H1 (cell line): ENCODE measurements at regions of chr17 and their contacts with region 1.

Region 1: GRCh38 chr17:40113110-40113906 is 8.5 kb upstream of the MSL1 start:
- DNase-seq: peak in 1 of 2 experiments; percentile 92
- H3K4me3 ChIP-seq: peak overlapping the region; percentile 1 to 53 (median 11); a peak in 5 of 8 replicates
- H3K27ac ChIP-seq: peak overlapping the region; percentile 93
- H3K4me1 ChIP-seq: peaks cover 23 to 33% (median 31%) of the 10 kb centered on the region in 4 experiments
- H3K27me3 ChIP-seq: no peaks in the 10 kb centered on the region; a peak in 2 of 7 replicates
- CTCF ChIP-seq: peak; percentile 73 to 90 (median 78)
- EP300 ChIP-seq: peak in 1 of 2 experiments; percentile 4; a peak in 1 of 3 replicates
- POLR2A ChIP-seq: peak in 1 of 2 experiments; percentile 86; a peak in 2 of 3 replicates
- RAD21 ChIP-seq: peak; percentile 80 to 84

Region 2: DNA sequence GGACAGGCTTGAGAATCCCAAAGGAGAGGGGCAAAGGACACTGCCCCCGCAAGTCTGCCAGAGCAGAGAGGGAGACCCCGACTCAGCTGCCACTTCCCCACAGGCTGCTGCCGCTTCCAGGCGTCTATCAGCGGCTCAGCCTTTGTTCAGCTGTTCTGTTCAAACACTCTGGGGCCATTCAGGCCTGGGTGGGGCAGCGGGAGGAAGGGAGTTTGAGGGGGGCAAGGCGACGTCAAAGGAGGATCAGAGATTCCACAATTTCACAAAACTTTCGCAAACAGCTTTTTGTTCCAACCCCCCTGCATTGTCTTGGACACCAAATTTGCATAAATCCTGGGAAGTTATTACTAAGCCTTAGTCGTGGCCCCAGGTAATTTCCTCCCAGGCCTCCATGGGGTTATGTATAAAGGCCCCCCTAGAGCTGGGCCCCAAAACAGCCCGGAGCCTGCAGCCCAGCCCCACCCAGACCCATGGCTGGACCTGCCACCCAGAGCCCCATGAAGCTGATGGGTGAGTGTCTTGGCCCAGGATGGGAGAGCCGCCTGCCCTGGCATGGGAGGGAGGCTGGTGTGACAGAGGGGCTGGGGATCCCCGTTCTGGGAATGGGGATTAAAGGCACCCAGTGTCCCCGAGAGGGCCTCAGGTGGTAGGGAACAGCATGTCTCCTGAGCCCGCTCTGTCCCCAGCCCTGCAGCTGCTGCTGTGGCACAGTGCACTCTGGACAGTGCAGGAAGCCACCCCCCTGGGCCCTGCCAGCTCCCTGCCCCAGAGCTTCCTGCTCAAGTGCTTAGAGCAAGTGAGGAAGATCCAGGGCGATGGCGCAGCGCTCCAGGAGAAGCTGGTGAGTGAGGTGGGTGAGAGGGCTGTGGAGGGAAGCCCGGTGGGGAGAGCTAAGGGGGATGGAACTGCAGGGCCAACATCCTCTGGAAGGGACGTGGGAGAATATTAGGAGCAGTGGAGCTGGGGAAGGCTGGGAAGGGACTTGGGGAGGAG is 98.0 kb before region 1 on chr17 and contains the start of gene CSF3:
- CTCF ChIA-PET with region 1: interaction called, 39 read pairs
- POLR2A ChIA-PET with region 1: interaction called, 5 read pairs
- DNase-seq: no peak
- H3K4me3 ChIP-seq: no peak within 1 kb of the TSS
- H3K27ac ChIP-seq: peak within 1 kb of the TSS; percentile 10; the same call in 1 of the 2 replicates
- H3K4me1 ChIP-seq: peaks cover 0 to 27% (median 18%) of the 10 kb centered on the region in 4 experiments; a peak in 6 of 7 replicates
- H3K27me3 ChIP-seq: peaks cover 0 to 2% (median 0%) of the 10 kb centered on the region in 4 experiments; a peak in 2 of 7 replicates
- CTCF ChIP-seq: no peak
- EP300 ChIP-seq: no peak
- POLR2A ChIP-seq: no peak
- RAD21 ChIP-seq: no peak
- total RNA-seq, gene CSF3: not detected in 2 replicates

Region 3: DNA sequence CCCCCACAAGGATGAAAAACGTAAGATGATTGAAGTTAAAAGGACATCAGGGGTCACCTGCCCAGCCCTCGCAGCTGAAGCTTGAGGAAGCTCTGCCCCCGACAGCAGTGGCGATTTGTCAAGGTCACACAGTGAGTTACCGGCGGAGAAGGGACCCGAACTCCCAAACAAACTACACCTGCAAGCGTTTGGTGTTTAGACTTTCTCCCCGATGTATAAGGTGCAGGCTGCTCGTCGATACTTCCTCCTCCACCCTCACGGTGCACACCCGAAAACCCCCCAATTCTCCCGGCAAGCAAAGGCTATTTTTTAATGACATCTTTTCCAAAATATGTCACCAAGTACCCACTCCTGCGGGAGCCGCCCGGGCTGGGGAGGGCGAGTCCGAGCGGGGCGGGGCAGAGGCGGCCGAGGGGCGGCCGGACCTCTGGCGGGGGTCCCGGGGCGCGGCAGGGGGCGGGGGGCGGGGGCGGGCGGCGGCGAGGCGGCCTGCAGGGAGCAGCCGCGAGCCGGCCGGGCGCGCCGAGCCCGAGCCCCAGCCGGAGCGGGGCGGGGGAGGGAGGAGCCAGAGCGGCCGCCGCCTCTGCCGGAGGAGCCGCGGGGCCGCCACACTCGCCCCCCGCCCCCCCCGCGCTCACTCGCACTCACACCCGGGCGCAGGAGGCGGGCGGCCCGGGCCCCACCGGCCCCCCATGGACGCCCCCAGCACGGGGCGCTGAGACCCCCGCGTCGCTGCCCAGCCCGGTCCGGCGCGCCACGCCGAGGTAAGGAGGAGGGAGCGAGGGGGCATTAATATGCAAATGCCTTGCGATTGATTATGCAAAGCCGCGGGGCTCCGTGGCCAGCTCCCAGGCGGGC is 50.8 kb before region 1 on chr17 and contains the start of gene THRA:
- CTCF ChIA-PET with region 1: interaction called, 37 read pairs
- POLR2A ChIA-PET with region 1: interaction called, 4 read pairs
- DNase-seq: peak in 1 of 2 experiments; percentile 89
- H3K4me3 ChIP-seq: peak within 1 kb of the TSS; percentile 78 to 87 (median 81)
- H3K27ac ChIP-seq: peak within 1 kb of the TSS; percentile 60; the same call in 1 of the 2 replicates
- H3K4me1 ChIP-seq: peaks cover 21 to 46% (median 31%) of the 10 kb centered on the region in 4 experiments
- H3K27me3 ChIP-seq: peaks cover 0 to 15% (median 10%) of the 10 kb centered on the region in 4 experiments; a peak in 6 of 7 replicates
- CTCF ChIP-seq: no peak; a peak in 1 of 4 replicates
- EP300 ChIP-seq: no peak
- POLR2A ChIP-seq: no peak
- RAD21 ChIP-seq: no peak
- total RNA-seq, gene THRA: 10.2 and 11.8 TPM in 2 replicates

Region 4: DNA sequence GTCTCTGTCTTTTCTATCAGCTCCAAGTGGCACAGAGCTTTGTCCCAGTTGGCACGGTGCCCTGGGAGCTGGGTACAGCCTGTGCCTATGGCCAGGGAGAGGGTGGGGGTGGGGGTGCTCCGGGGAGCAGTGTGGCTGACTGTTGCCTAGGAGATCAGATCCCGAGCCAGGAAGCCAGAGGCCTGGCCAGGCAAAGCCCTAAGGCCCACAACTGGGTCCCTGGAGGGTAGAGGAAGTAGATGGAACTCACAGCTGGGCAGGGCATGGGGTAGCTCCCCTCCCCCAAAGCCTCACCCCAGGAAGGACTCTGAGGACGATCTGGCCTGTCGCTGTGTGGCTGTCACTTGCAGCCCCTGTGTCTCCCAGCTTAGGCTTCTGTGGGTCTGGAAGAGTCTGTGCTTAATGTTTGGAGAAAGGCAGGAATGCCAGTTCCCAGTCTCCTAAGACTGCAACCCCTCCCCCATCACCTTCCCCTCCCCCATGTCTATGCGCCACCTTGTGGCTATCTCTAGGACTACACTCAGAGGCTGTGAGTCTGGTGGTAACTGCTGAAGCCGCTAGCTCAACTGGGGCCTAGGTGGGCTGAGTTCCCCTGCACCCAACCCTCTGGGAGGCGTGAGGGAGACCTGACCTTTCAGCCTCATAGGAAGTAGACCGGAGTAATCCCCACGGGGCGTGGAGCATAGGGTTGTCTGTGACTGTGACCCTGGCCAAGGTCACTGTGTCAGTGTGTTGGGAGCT is 37.9 kb before region 1 on chr17:
- CTCF ChIA-PET with region 1: interaction called, 87 read pairs
- POLR2A ChIA-PET with region 1: interaction called, 6 read pairs
- DNase-seq: peak; percentile 66 to 92
- H3K4me3 ChIP-seq: 0 out of 8 replicates have a peak overlapping the region, but pooled peaks of 1 of the 4 experiments have one; percentile 19
- H3K27ac ChIP-seq: no peak overlapping the region; the same call in 1 of the 2 replicates
- H3K4me1 ChIP-seq: peaks cover 10 to 31% (median 28%) of the 10 kb centered on the region in 4 experiments
- H3K27me3 ChIP-seq: no peaks in the 10 kb centered on the region
- CTCF ChIP-seq: peak; percentile 87 to 94 (median 88)
- EP300 ChIP-seq: 0 out of 3 replicates have a peak, but pooled peaks of 1 of the 2 experiments have one; percentile 41
- POLR2A ChIP-seq: no peak
- RAD21 ChIP-seq: peak; percentile 67 to 74

Region 5: GRCh38 chr17:40098846-40099618 is 14.3 kb before region 1 on chr17:
- CTCF ChIA-PET with region 1: interaction called, 110 read pairs
- POLR2A ChIA-PET with region 1: interaction called, 399 read pairs
- DNase-seq: peak; percentile 95 to 97
- H3K4me3 ChIP-seq: peak overlapping the region; percentile 48 to 83 (median 63)
- H3K27ac ChIP-seq: 0 out of 2 replicates have a peak overlapping the region, but pooled peaks have one; percentile 25
- H3K4me1 ChIP-seq: peaks cover 14 to 33% (median 23%) of the 10 kb centered on the region in 4 experiments
- H3K27me3 ChIP-seq: peaks cover 6 to 24% (median 16%) of the 10 kb centered on the region in 4 experiments; a peak in 6 of 7 replicates
- CTCF ChIP-seq: no peak
- EP300 ChIP-seq: no peak
- POLR2A ChIP-seq: no peak
- RAD21 ChIP-seq: no peak

Region 6: DNA sequence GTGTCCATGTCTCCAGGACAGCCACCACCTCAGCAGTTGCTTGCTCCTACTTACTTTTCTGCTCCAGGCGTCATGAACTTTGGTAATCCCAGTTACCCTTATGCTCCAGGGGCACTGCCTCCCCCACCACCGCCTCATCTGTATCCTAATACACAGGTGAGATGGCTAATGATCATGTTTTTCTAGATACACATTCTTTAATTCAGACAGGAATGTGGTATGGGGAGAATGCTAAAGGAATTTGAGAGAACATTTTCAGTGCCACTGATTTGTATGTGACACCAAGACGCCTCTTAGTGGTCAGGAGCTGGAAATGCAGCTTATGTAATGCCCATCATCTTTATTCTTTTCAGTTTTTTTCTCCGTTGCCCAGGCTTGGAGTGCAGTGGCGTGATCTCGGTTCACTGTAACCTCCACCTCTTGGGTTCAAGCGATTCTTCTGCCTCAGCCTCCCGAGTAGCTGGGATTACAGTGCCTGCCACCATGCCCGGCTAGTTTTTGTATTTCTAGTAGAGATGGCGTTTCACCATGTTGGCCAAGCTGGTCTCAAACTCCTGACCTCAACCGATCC is 55.0 kb after region 1 on chr17:
- CTCF ChIA-PET with region 1: interaction called, 59 read pairs
- POLR2A ChIA-PET with region 1: interaction called, 11 read pairs
- DNase-seq: peak in 1 of 2 experiments; percentile 59
- H3K4me3 ChIP-seq: no peak overlapping the region
- H3K27ac ChIP-seq: 0 out of 2 replicates have a peak overlapping the region, but pooled peaks have one; percentile 62
- H3K4me1 ChIP-seq: peaks cover 0 to 6% (median 0%) of the 10 kb centered on the region in 4 experiments; a peak in 2 of 7 replicates
- H3K27me3 ChIP-seq: no peaks in the 10 kb centered on the region
- CTCF ChIP-seq: peak in 2 of 3 experiments; percentile 51 to 77; a peak in 3 of 4 replicates
- EP300 ChIP-seq: peak in 1 of 2 experiments; percentile 36; a peak in 1 of 3 replicates
- POLR2A ChIP-seq: no peak
- RAD21 ChIP-seq: peak; percentile 59 to 63

Region 7: DNA sequence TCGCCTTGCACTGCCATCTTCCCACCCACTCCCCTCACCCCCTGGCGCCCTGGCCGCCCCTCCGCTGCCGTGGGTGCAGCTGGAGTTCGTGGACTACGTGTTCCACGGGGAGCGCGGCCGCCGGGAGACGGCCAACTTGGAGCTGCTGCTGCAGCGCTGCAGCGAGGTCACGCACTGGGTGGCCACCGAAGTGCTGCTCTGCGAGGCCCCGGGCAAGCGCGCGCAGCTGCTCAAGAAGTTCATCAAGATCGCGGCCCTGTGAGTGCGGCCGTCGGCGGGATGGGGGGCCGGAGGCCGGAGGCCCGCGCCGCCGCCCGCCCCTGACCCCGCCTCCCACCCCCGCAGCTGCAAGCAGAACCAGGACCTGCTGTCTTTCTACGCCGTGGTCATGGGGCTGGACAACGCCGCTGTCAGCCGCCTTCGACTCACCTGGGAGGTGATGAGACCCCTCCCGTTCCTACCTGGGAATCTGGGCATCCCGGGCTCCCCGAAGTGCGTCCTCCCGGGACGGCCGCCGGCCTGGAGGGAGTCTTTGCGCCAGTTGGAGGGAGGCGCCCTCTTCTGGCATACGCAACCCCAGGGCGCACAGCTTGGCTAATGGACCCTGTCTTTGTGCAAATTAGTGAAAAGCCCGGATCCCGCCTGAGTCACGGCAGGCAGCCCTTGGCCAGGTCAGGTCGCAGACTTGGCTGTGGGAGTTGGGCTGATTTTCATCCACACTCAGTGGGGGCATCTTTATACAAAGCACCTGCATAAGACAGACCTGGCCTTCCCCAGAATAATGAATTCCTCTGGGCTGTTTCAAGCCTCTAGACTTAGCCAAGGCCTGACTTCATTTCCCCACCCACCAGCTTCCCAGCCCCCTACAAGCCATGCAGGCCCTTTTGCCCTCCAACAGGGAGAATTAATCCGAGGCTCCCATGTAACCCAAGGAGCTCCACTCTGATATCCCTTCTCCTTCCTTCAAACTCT is 78.2 kb after region 1 on chr17:
- CTCF ChIA-PET with region 1: interaction called, 33 read pairs
- POLR2A ChIA-PET with region 1: interaction called, 4 read pairs
- DNase-seq: peak; percentile 70 to 87
- H3K4me3 ChIP-seq: peak overlapping the region; percentile 20 to 73 (median 44)
- H3K27ac ChIP-seq: no peak overlapping the region
- H3K4me1 ChIP-seq: peaks cover 0 to 15% (median 8%) of the 10 kb centered on the region in 4 experiments; a peak in 5 of 7 replicates
- H3K27me3 ChIP-seq: no peaks in the 10 kb centered on the region
- CTCF ChIP-seq: peak; percentile 58 to 73 (median 71)
- EP300 ChIP-seq: no peak
- POLR2A ChIP-seq: no peak
- RAD21 ChIP-seq: peak; percentile 32 to 60

Region 8: DNA sequence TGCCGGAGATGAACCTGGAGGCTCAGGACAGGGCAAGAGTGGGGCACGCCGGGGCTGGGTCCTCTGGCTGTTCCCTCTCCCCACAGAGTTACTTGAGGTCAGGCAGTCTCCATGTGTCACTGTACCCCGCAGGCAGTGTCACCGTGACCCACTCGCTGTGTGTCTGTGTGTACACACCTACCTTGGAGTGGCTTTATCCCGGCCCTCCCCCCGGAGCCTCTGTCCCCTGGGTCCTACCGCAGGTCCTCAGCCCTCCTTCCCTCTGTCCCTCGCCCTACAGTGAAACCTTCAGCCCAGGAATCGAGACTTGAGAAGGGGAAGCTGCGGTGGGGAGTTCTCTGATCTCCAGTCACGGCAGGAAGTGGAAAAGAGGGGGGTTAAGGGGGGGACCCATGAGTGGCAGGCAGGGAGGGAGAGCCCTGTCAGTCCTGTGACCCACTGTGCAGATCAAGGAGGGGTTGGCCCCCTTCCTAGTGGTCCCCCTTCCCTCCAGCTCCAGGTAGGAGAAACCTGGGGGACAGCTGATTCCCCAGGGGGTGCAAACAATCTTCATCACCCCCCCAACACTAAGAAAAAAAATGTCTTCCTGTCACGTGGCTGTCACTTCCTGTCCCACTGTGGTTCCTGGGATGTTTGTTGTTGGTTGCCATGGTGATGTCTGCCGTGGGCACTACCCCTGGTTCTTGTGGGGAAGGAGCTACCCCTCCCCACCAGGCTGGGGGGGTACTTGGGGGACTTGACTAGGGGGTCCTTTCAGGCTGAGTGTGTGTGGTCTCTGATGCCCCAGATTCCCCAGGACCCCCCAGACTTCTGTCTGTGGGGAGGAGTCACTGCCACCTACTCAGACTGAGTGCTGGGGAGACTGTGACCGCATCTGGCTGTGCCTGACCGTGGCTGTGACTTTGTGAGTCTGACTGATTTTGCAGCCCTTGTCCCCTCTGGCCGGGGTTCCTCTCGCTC is 209.3 kb after region 1 on chr17:
- CTCF ChIA-PET with region 1: no interaction called
- POLR2A ChIA-PET with region 1: no interaction called
- DNase-seq: no peak
- H3K4me3 ChIP-seq: no peak overlapping the region
- H3K27ac ChIP-seq: no peak overlapping the region
- H3K4me1 ChIP-seq: peaks cover 0 to 23% (median 16%) of the 10 kb centered on the region in 4 experiments; a peak in 6 of 7 replicates
- H3K27me3 ChIP-seq: peaks cover 0 to 14% (median 6%) of the 10 kb centered on the region in 4 experiments; a peak in 5 of 7 replicates
- CTCF ChIP-seq: no peak
- EP300 ChIP-seq: no peak
- POLR2A ChIP-seq: no peak
- RAD21 ChIP-seq: no peak